WTC11 (cell line): ENCODE measurements at regions of chr6 and their contacts with region 1.

Region 1: DNA sequence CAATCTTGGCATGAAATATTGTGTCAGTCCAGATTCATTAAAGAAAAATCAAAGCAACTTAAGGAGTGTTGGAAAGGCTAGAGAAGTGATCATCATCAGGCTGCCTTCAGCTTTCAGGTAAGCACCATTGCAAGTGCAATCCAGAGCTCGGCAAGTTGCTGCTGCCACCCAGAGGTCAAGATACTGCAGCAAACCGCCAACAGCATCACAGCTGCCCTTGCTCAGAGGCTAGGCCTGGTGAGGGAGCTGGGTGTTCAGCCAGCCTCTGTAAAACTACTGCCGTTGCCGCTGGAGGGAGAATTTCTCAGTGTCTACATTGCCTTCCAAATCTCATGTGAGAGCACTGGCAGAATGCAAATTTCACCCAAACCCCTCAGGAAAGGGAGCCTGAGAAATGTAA is 5.8 kb upstream of the SYNE1 start:
- DNase-seq: peak; percentile 79
- ATAC-seq: peak; percentile 100
- H3K4me3 Mint-ChIP-seq: no peak overlapping the region
- H3K27ac Mint-ChIP-seq: peak overlapping the region; percentile 80
- H3K4me1 Mint-ChIP-seq: peaks cover 10% of the 10 kb centered on the region
- H3K27me3 Mint-ChIP-seq: peaks cover 12% of the 10 kb centered on the region
- CTCF ChIP-seq: peak; percentile 20; the same call in 1 of the 2 replicates

Region 2: DNA sequence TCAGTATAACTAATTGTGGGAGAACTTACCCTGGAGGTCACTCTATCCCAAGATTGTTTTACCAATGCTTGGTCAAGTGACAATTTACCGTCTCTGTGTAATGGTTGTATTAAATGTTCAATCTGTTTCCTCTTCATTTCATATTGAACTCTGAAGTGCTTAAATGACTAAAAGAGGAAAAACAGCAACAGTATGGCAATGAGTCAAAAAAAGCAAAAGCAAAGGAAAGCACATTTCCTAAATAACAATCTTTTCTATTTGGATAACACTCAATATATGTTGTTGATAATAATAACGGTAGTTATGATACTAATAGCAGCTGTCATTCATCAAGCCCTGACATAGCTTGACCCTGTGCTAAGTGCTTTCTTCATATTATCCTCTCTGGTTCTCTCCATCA is 158.2 kb before region 1 on chr6:
- CTCF ChIA-PET with region 1: interaction called, 12 read pairs
- POLR2A ChIA-PET with region 1: no interaction called
- DNase-seq: no peak
- ATAC-seq: no peak
- H3K4me3 Mint-ChIP-seq: no peak overlapping the region
- H3K27ac Mint-ChIP-seq: no peak overlapping the region
- H3K4me1 Mint-ChIP-seq: peaks cover 11% of the 10 kb centered on the region
- H3K27me3 Mint-ChIP-seq: no peaks in the 10 kb centered on the region
- CTCF ChIP-seq: no peak

Region 3: DNA sequence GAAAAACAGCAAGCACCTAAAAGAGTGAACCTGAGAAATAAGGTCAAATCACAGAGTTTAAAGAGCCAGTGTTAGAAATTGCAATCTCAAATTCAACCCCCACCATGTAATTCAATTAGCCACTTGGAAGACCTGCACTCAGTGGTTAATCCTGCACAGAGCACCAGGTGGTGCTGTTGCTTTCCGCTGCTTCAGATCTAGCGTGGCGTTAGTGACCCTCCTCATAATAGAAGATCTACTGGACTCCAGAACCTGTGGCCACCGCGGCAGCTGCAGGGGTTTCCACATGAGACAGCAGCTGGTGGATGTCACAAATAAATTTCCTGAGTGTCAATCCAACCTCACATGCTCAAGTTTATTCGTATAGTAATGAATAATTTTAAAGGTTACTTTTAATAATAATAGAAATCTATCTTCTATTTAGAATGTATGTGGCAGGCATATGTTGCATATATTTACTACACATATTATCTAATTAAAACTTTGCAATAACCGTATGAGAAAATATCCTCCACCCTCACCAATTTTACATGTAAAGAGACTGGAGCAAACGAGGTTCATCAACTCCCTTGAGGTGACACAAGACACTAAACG is 90.3 kb before region 1 on chr6:
- CTCF ChIA-PET with region 1: interaction called, 30 read pairs
- POLR2A ChIA-PET with region 1: no interaction called
- DNase-seq: peak; percentile 75
- ATAC-seq: peak; percentile 100
- H3K4me3 Mint-ChIP-seq: no peak overlapping the region
- H3K27ac Mint-ChIP-seq: no peak overlapping the region
- H3K4me1 Mint-ChIP-seq: no peaks in the 10 kb centered on the region
- H3K27me3 Mint-ChIP-seq: no peaks in the 10 kb centered on the region
- CTCF ChIP-seq: peak; percentile 69

Region 4: GRCh38 chr6:152630832-152631231 is 12.2 kb before region 1 on chr6:
- CTCF ChIA-PET with region 1: interaction called, 12 read pairs
- POLR2A ChIA-PET with region 1: no interaction called
- DNase-seq: no peak
- ATAC-seq: no peak
- H3K4me3 Mint-ChIP-seq: no peak overlapping the region
- H3K27ac Mint-ChIP-seq: no peak overlapping the region
- H3K4me1 Mint-ChIP-seq: peaks cover 7% of the 10 kb centered on the region
- H3K27me3 Mint-ChIP-seq: peaks cover 13% of the 10 kb centered on the region
- CTCF ChIP-seq: no peak

Region 5: GRCh38 chr6:152669895-152670294 is 26.9 kb after region 1 on chr6:
- CTCF ChIA-PET with region 1: interaction called, 14 read pairs
- POLR2A ChIA-PET with region 1: no interaction called
- DNase-seq: no peak
- ATAC-seq: peak; percentile 72
- H3K4me3 Mint-ChIP-seq: no peak overlapping the region
- H3K27ac Mint-ChIP-seq: no peak overlapping the region
- H3K4me1 Mint-ChIP-seq: peaks cover 3% of the 10 kb centered on the region; the same call in 1 of the 2 replicates
- H3K27me3 Mint-ChIP-seq: no peaks in the 10 kb centered on the region
- CTCF ChIP-seq: no peak

Region 6: DNA sequence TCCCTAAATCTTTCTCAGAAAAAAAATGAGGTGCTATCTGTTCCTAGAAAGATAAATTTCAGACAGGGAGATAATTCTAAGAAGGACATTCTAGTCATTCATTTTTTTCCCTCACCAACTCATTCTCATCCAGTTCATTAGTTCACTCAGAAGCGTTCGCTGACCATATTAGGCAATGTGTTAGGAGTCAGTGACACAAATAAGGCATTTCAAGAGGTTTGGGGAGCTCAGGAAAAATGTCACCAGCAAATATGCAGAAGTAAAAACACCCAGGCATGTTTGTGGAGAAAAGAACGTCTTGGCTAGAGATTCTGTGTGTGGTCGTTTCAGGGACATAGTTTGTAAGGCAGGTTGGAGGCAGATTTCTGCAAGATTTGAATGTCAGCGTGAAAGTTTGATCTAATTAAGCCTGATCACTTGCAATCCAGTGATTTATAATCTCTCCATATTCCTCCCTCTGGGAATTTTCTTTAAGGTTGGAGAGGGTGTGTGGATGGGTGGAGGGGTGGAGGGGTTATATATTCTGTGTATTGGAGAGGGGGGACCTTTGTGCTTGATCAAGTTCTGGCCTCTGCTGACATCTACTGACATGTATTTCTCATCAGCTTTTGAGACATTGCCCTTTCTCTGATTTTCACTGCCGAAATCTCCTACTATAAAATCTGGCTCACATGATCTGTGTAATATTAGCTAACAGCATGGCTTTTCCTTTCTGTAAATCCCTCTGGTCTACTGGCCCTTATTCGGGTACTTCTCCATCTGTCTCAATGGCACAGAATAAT is 58.3 kb after region 1 on chr6:
- CTCF ChIA-PET with region 1: interaction called, 12 read pairs
- POLR2A ChIA-PET with region 1: no interaction called
- DNase-seq: no peak
- ATAC-seq: peak; percentile 94
- H3K4me3 Mint-ChIP-seq: no peak overlapping the region
- H3K27ac Mint-ChIP-seq: no peak overlapping the region; the same call in 1 of the 2 replicates
- H3K4me1 Mint-ChIP-seq: peaks cover 13% of the 10 kb centered on the region
- H3K27me3 Mint-ChIP-seq: no peaks in the 10 kb centered on the region
- CTCF ChIP-seq: no peak

Region 7: DNA sequence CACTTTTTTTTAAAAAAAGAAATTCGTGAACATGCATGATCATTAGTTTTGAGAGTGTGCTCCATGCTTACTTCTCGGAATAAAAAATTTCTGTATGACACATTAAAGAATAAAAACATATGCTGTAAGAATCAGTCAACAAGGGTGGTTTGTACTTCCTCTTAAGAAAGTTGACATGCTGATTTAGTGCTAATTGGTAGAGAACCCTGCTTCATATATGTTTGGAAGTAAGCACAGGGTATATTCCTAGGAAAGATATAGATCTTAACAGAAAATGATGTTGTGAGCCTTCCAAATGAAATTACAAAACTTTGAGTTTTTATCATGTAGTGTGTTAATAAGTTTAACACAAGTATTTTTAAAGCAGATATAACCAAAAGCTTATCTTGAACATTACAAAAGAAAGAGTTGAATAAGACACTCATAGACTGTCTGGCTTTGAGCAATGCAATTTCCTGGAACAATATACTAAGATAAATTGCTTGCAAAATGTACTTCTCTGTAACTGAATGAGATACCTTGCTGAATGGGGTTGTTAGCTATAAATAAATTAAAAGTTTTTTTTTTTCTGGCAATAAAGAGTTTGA is 93.8 kb after region 1 on chr6:
- CTCF ChIA-PET with region 1: no interaction called
- POLR2A ChIA-PET with region 1: no interaction called
- DNase-seq: no peak
- ATAC-seq: no peak
- H3K4me3 Mint-ChIP-seq: no peak overlapping the region
- H3K27ac Mint-ChIP-seq: no peak overlapping the region
- H3K4me1 Mint-ChIP-seq: no peaks in the 10 kb centered on the region
- H3K27me3 Mint-ChIP-seq: no peaks in the 10 kb centered on the region
- CTCF ChIP-seq: no peak